HepG2 (cell line): ENCODE measurements at regions of chr3 and their contacts with region 1.

Region 1: DNA sequence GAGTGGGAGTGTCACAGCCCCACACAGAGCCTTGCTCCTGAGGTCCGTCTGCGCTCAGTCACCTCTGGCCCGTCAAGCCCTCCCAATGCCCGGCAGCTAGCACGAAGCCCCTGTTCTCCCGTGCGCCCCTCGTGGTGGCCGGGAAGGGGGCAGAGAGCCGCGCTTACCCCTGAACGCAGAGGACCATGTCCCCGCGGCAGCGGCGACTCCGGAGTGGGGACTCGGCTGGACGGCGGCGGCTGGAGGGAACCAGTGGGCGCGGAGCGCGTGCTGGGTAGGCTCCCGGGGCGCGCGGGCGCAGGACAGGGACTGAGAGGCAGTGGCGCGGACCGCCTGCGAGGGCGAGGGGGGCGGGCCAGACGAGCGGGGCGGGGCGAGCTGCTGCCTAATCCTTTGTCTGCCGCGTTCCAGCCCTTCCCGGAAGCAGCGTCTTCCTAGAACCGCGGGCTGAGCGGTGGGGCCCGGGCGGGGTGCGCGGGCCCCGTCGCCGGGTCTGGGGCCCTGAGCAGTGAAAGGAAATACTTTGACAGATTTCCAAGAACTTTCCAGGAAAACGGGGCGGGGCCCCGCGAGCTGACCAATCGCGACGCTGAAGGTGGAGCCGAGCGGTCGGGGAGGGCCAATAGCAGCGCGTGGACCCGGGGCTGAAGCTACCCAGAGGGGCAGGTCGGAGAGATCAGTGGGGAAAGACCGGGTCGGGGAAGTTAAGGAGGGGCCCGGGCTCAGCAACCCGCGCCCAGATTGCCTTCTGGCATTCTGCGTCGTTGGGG is at the start of gene CISH:
- DNase-seq: peak; percentile 91
- ATAC-seq: peak; percentile 83
- H3K4me3 ChIP-seq: peak within 1 kb of the TSS; percentile 32 to 76 (median 55); a peak in 5 of 6 replicates
- H3K27ac ChIP-seq: peak within 1 kb of the TSS; percentile 19
- H3K4me1 ChIP-seq: peaks cover 44% of the 10 kb centered on the region
- H3K27me3 ChIP-seq: peaks cover 0 to 10% of the 10 kb centered on the region in 2 experiments; a peak in 1 of 5 replicates
- CTCF ChIP-seq: peak; percentile 66
- EP300 ChIP-seq: peak in 1 of 2 experiments; percentile 63; a peak in 2 of 4 replicates
- POLR2A ChIP-seq: no peak
- RAD21 ChIP-seq: peak; percentile 76
- total RNA-seq, gene CISH: 0.73 and 0.91 TPM in 2 replicates

Region 2: DNA sequence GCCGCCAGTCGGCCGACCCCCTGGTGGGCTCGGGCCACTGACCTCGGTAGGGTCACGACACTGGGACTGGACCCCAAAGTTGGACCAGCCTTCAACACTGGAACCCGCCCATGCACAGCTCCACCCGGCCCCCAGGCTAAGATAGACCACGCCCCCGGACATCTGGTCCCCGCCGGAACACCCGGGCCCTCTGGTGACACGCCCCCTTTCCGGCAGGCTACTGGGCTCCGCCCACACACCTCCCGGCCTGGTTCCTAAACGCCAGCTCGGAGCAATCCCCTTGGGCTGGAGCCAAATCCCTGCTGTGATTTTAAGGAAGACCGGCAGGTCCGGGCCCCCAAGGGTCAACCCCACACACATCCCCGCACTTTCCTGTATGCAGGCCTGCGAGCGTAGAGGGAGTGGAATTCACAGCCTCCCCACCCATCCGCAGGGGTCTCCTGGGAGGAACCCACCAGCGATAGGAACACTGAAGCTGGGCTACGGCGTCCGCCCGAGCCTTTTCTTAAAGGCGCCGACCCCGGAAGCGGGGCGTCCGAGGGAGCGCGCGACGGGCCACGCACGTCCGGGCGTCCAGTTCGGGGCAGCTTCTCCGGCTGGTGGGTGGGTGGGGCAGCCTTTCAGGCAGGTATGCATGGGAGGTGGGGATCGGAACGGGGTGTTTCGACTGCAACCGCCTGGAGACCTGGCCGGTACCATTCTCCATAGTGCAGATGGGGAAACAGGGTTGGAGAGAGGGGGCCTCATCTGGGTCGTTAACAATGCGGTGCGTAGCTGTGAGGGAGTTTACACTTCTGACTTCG is 42.5 kb before region 1 on chr3 and contains the start of gene HEMK1:
- CTCF ChIA-PET with region 1: interaction called, 182 read pairs
- POLR2A ChIA-PET with region 1: interaction called, 64 read pairs
- in situ Hi-C with region 1: loop called (anchors 5 kb)
- intact Hi-C with region 1: loop called (anchors 1 kb)
- DNase-seq: peak; percentile 85
- ATAC-seq: peak; percentile 85
- H3K4me3 ChIP-seq: peak within 1 kb of the TSS; percentile 62 to 84 (median 82)
- H3K27ac ChIP-seq: peak within 1 kb of the TSS; percentile 77
- H3K4me1 ChIP-seq: peaks cover 57% of the 10 kb centered on the region
- H3K27me3 ChIP-seq: peaks cover 4 to 7% of the 10 kb centered on the region in 2 experiments; a peak in 2 of 5 replicates
- CTCF ChIP-seq: no peak
- EP300 ChIP-seq: no peak
- POLR2A ChIP-seq: no peak; a peak in 2 of 4 replicates
- RAD21 ChIP-seq: 0 out of 2 replicates have a peak, but pooled peaks have one; percentile 22
- total RNA-seq, gene HEMK1: 6.3 and 9.8 TPM in 2 replicates

Region 3: DNA sequence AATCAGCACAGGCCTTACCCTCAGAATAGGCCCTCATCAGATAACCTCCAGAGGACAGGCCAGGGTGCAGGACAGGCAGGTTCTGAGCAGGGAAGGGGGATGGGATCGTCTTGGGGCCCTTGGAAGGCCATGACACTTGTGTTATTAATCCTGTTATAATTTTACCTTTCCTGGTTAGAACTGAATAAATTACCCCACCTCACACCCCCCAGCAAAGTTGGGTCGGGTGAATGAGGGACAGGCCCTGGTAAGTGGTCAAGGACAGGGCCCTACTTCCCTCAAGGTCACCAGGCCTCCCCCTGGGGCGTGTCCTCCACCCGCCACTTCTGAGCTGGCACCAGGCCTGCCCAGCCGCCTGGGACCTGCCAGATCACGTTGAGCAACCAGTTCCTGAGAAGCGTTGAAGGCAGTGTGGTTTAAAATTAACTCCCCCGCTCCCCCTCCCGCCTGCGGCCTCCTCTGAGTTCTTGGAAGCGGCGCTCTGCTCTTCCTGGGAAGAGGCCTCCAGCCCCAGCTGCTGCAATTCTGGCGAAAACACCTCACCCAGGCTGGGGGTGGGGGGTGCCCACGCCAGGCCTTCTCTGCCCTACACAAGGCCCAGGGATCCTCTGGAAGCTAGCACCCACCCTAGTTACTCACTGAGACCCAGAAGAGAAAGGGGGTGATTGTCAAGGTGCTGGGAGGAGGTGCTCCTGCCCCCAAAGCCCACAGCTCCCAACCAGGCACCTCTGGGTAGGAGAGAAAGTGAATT is 10.6 kb before region 1 on chr3:
- CTCF ChIA-PET with region 1: no interaction called
- POLR2A ChIA-PET with region 1: interaction called, 101 read pairs
- in situ Hi-C with region 1: no loop called
- intact Hi-C with region 1: loop called (anchors 1 kb)
- DNase-seq: peak; percentile 90
- ATAC-seq: peak; percentile 80
- H3K4me3 ChIP-seq: peak overlapping the region; percentile 47 to 72 (median 49); a peak in 5 of 6 replicates
- H3K27ac ChIP-seq: peak overlapping the region; percentile 97
- H3K4me1 ChIP-seq: peaks cover 79% of the 10 kb centered on the region
- H3K27me3 ChIP-seq: no peaks in the 10 kb centered on the region
- CTCF ChIP-seq: peak; percentile 29; the same call in 1 of the 2 replicates
- EP300 ChIP-seq: peak in 1 of 2 experiments; percentile 74; a peak in 2 of 4 replicates
- POLR2A ChIP-seq: peak in 1 of 2 experiments; percentile 68; a peak in 2 of 4 replicates
- RAD21 ChIP-seq: no peak

Region 4: DNA sequence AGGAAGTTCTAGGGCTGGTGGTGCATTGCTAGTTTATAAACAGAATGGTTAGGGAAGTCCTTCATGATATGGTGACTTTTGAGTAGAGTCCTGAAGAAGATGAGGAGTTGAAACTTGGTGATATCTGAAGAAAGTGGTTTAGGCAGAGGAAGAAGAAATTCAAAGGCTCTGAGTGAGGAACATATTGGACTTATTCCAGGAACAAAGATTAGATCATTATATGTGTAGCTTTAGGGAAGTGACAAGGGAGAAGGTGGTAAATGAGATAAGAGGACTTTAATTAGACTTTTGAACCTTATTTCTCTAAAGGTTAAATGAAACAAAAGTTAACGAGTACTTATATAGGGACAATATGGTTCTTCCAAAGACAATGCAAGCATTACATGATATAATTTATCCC is 349.7 kb after region 1 on chr3:
- CTCF ChIA-PET with region 1: no interaction called
- POLR2A ChIA-PET with region 1: no interaction called
- in situ Hi-C with region 1: no loop called
- intact Hi-C with region 1: loop called (anchors 10 kb)
- DNase-seq: no peak
- ATAC-seq: no peak
- H3K4me3 ChIP-seq: no peak overlapping the region
- H3K27ac ChIP-seq: no peak overlapping the region
- H3K4me1 ChIP-seq: no peaks in the 10 kb centered on the region
- H3K27me3 ChIP-seq: no peaks in the 10 kb centered on the region
- CTCF ChIP-seq: no peak
- EP300 ChIP-seq: no peak
- POLR2A ChIP-seq: no peak
- RAD21 ChIP-seq: no peak

Region 5: GRCh38 chr3:51384726-51385473 is 773.3 kb after region 1 on chr3 and contains the start of gene MANF:
- CTCF ChIA-PET with region 1: interaction called, 3 read pairs
- POLR2A ChIA-PET with region 1: interaction called, 15 read pairs
- in situ Hi-C with region 1: no loop called
- intact Hi-C with region 1: no loop called
- DNase-seq: peak; percentile 96
- ATAC-seq: peak; percentile 94
- H3K4me3 ChIP-seq: peak within 1 kb of the TSS; percentile 90 to 95 (median 92)
- H3K27ac ChIP-seq: peak within 1 kb of the TSS; percentile 96
- H3K4me1 ChIP-seq: peaks cover 55% of the 10 kb centered on the region
- H3K27me3 ChIP-seq: peaks cover 0 to 1% of the 10 kb centered on the region in 2 experiments; a peak in 1 of 5 replicates
- CTCF ChIP-seq: peak; percentile 2; the same call in 1 of the 2 replicates
- EP300 ChIP-seq: no peak
- POLR2A ChIP-seq: peak in 1 of 2 experiments; percentile 85; a peak in 2 of 4 replicates
- RAD21 ChIP-seq: peak; percentile 25; the same call in 1 of the 2 replicates
- total RNA-seq, gene MANF: 111 and 269 TPM in 2 replicates